Activated naive CD4-positive, alpha-beta T cell treated with anti-CD3 and anti-CD28 coated beads for 36 hours (primary cell): ENCODE measurements at regions of chr1 and their contacts with region 1.

Region 1: DNA sequence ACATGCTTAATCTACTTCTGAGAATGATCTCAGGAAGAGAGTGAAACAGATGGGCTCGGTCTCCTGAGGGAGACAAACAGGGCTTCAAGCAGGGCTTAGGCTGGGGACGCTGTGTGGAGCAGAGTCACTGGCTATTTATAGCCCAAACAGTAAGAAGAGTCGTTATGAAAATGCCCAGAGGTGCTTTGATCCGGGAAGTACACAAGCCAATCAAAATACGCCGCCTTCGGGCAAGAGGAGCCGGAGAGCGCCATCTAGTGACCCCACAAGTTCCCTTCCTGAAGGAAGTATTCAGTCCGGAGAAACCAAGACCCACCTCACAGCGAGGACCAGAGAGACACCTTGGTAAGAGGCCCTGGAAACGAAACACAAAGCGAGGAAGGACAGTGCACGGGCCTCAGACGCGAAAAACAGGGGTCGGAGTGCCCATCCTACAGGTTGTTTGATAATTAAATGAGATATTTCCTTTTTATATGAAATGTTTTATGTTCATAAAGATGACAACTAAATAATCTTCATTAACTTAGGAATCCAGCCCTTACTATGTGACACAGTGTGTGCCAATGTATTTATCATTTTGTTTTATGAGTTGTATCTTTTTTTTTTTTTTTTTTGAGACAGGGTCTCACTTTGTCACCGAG is 25.0 kb upstream of the SCCPDH start:
- DNase-seq: peak; percentile 93
- H3K4me3 Mint-ChIP-seq: peak overlapping the region; percentile 32
- H3K27ac Mint-ChIP-seq: peak overlapping the region; percentile 30
- H3K4me1 Mint-ChIP-seq: peaks cover 2% of the 10 kb centered on the region
- H3K27me3 Mint-ChIP-seq: peaks cover 6% of the 10 kb centered on the region

Region 2: GRCh38 chr1:245953876-245954660 is 745.1 kb before region 1 on chr1:
- CTCF ChIA-PET with region 1: no interaction called
- intact Hi-C with region 1: loop called (anchors 2 kb)
- DNase-seq: peak; percentile 17
- H3K4me3 Mint-ChIP-seq: peak overlapping the region; percentile 54
- H3K27ac Mint-ChIP-seq: peak overlapping the region; percentile 87
- H3K4me1 Mint-ChIP-seq: peaks cover 27% of the 10 kb centered on the region
- H3K27me3 Mint-ChIP-seq: no peaks in the 10 kb centered on the region

Region 3: DNA sequence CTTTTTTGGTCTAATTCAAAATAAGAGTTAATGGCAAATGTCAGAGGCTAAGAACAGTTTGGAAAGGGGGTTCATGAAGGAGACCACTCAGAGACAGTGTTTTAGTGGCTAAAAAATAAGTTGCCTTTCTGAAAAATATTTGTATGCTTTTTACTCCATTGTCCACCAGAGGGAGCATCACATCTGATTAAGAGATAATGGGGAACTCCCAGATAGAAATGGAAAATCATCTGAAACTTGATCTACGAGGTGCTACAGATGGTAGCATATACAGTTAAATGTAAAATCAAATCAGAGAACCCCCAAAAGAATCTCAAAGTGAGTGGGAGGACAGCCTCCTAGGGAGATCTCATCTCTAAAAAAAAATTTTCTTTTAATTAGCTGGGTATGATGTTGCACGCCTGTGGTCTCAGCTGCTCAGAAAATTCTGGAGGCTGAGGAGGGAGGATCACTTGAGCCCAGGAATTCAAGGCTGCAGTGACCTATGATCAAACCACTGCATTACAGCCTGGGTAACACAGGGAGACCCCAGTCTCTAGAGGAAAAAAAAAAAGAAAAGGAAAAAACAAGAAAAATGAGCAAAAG is 201.8 kb before region 1 on chr1:
- CTCF ChIA-PET with region 1: interaction called, 9 read pairs
- intact Hi-C with region 1: loop called (anchors 1 kb)
- DNase-seq: no peak
- H3K4me3 Mint-ChIP-seq: no peak overlapping the region
- H3K27ac Mint-ChIP-seq: no peak overlapping the region
- H3K4me1 Mint-ChIP-seq: peaks cover 13% of the 10 kb centered on the region
- H3K27me3 Mint-ChIP-seq: no peaks in the 10 kb centered on the region

Region 4: GRCh38 chr1:246753670-246754535 is 54.7 kb after region 1 on chr1:
- CTCF ChIA-PET with region 1: no interaction called
- intact Hi-C with region 1: loop called (anchors 1 kb)
- DNase-seq: peak; percentile 72
- H3K4me3 Mint-ChIP-seq: no peak overlapping the region
- H3K27ac Mint-ChIP-seq: no peak overlapping the region
- H3K4me1 Mint-ChIP-seq: no peaks in the 10 kb centered on the region
- H3K27me3 Mint-ChIP-seq: no peaks in the 10 kb centered on the region

Region 5: GRCh38 chr1:246971090-246971721 is 272.0 kb after region 1 on chr1:
- CTCF ChIA-PET with region 1: no interaction called
- intact Hi-C with region 1: loop called (anchors 2 kb)
- DNase-seq: peak; percentile 55
- H3K4me3 Mint-ChIP-seq: no peak overlapping the region
- H3K27ac Mint-ChIP-seq: no peak overlapping the region
- H3K4me1 Mint-ChIP-seq: no peaks in the 10 kb centered on the region
- H3K27me3 Mint-ChIP-seq: peaks cover 3% of the 10 kb centered on the region